ENCODE measurements at regions of chr4 and their contacts with region 1.

Region 1: GRCh38 chr4:156378033-156378665 is 424.5 kb upstream of the CTSO start:
- DNase-seq: peak; percentile 54
- H3K4me3 ChIP-seq: no peak overlapping the region
- H3K27ac ChIP-seq: no peak overlapping the region
- H3K27me3 ChIP-seq: no peaks in the 10 kb centered on the region
- CTCF ChIP-seq: peak; percentile 87

Region 2: GRCh38 chr4:156169011-156169410 is 209.1 kb before region 1 on chr4:
- CTCF ChIA-PET with region 1: interaction called, 10 read pairs
- POLR2A ChIA-PET with region 1: no interaction called
- DNase-seq: peak; percentile 79
- H3K4me3 ChIP-seq: no peak overlapping the region
- H3K27ac ChIP-seq: no peak overlapping the region
- H3K27me3 ChIP-seq: no peaks in the 10 kb centered on the region
- CTCF ChIP-seq: peak; percentile 84

Region 3: GRCh38 chr4:156420623-156421022 is 42.5 kb after region 1 on chr4:
- CTCF ChIA-PET with region 1: no interaction called
- POLR2A ChIA-PET with region 1: no interaction called
- DNase-seq: no peak
- H3K4me3 ChIP-seq: no peak overlapping the region
- H3K27ac ChIP-seq: no peak overlapping the region
- H3K27me3 ChIP-seq: no peaks in the 10 kb centered on the region
- CTCF ChIP-seq: no peak

Measured in AG04450 (cell line).